CD8-positive, alpha-beta T cell (primary cell): ENCODE measurements at regions of chr1 and their contacts with region 1.

Region 1: DNA sequence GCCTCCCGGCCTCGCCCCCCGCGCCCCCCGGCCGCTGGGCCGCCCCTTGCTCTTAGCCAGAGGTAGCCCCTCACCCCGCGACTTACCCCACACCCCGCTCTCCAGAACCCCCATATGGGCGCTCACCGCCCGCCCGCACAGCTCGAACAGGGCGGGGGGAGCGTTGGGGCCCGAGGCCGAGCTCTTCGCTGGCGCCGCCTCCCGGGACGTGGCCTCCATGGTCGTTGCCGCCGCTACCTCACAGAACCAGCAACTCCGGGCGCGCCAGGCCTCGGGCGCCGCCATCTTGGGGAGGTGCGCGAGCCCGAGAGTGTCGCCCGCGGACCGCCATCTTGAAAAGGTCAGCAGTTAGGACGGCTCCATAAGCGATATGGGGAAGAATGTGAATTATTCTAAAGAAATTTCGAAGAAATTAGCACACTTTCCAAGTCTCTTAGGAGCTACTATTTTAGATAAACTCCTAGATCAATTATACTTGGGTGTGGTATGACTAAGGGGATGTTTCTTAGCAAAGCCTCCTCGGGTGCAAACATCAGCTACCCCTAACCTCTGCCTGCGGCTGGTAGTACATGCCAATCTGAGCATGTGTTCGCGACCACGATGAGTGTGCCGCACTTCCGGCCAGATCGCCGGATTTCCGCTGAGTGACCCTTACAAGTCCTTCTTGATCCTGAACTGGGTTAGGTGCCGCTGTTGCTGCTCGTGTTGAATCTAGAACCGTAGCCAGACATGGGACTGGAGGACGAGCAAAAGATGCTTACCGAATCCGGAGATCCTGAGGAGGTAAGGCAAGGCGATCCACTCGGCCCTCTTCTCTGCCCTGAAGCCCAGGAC is at the starts of genes LRRC41 and UQCRH:
- DNase-seq: peak; percentile 90 to 96 (median 92)
- ATAC-seq: peak; percentile 87
- H3K4me3 ChIP-seq: peak within 1 kb of the TSS; percentile 81 to 88
- H3K4me3 Mint-ChIP-seq: peak within 1 kb of the TSS; percentile 97
- H3K27ac ChIP-seq: peak within 1 kb of the TSS; percentile 84 to 89
- H3K27ac Mint-ChIP-seq: peak within 1 kb of the TSS; percentile 96
- H3K4me1 ChIP-seq: peaks cover 44% of the 10 kb centered on the region
- H3K4me1 Mint-ChIP-seq: peaks cover 55% of the 10 kb centered on the region
- H3K27me3 ChIP-seq: no peaks in the 10 kb centered on the region
- H3K27me3 Mint-ChIP-seq: no peaks in the 10 kb centered on the region
- CTCF ChIP-seq: no peak
- total RNA-seq, gene LRRC41: 25.5 to 27.1 TPM
- total RNA-seq, gene UQCRH: 100 to 118 TPM

Region 2: DNA sequence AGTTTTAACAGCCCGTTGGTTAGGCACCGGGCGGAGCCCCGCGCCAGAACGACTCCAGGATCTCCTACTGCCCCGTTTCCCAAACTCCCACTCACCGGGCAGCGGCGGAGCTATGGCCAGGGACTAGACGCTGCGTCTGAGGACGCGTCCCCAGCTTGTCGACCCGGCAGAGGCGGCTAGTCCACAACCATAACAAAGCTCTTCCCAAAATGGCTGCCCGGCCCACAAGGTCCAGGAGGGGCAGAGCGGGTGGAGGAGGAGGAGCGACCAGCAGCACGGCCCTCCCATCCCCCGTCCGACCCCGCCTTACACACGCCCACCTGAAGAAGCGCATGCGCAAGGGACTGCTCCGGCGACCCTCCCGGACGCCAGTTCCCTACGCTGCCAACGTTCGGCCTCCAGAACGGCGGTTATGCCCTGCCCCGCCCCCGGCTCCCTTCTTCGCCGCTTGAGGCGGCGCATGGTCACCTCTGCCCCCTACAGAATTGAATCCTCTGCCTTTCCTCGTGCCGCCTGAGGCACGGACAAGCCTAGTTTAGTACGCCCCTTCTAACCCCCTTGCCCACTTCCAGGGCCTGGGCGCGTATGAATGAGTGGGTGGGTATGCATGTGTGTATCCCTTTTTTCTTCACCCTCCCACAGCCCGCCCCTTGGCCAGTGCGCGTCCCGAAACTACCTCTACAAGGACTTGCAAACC is 616.8 kb before region 1 on chr1 and contains the start of gene GPBP1L1:
- CTCF ChIA-PET with region 1: no interaction called
- POLR2A ChIA-PET with region 1: no interaction called
- intact Hi-C with region 1: loop called (anchors 2 to 5 kb)
- DNase-seq: peak; percentile 95 to 98 (median 98)
- ATAC-seq: peak; percentile 72
- H3K4me3 ChIP-seq: peak within 1 kb of the TSS; percentile 99
- H3K4me3 Mint-ChIP-seq: peak within 1 kb of the TSS; percentile 97
- H3K27ac ChIP-seq: peak within 1 kb of the TSS; percentile 84 to 92
- H3K27ac Mint-ChIP-seq: peak within 1 kb of the TSS; percentile 100
- H3K4me1 ChIP-seq: peaks cover 39% of the 10 kb centered on the region
- H3K4me1 Mint-ChIP-seq: peaks cover 59% of the 10 kb centered on the region
- H3K27me3 ChIP-seq: no peaks in the 10 kb centered on the region
- H3K27me3 Mint-ChIP-seq: no peaks in the 10 kb centered on the region
- CTCF ChIP-seq: no peak
- total RNA-seq, gene GPBP1L1: 125 to 128 TPM

Region 3: GRCh38 chr1:46197964-46198811 is 105.1 kb before region 1 on chr1 and contains the start of gene POMGNT1:
- CTCF ChIA-PET with region 1: no interaction called
- POLR2A ChIA-PET with region 1: no interaction called
- intact Hi-C with region 1: loop called (anchors 1 to 5 kb)
- DNase-seq: peak; percentile 50 to 86 (median 72)
- ATAC-seq: peak; percentile 93
- H3K4me3 ChIP-seq: peak within 1 kb of the TSS; percentile 75 to 93
- H3K4me3 Mint-ChIP-seq: peak within 1 kb of the TSS; percentile 83
- H3K27ac ChIP-seq: peak within 1 kb of the TSS; percentile 58 to 59
- H3K27ac Mint-ChIP-seq: peak within 1 kb of the TSS; percentile 88
- H3K4me1 ChIP-seq: peaks cover 20% of the 10 kb centered on the region
- H3K4me1 Mint-ChIP-seq: peaks cover 32% of the 10 kb centered on the region
- H3K27me3 ChIP-seq: peaks cover 0 to 3% of the 10 kb centered on the region in 2 experiments
- H3K27me3 Mint-ChIP-seq: no peaks in the 10 kb centered on the region
- CTCF ChIP-seq: no peak
- total RNA-seq, gene POMGNT1: 20.3 to 23.4 TPM

Region 4: GRCh38 chr1:46236882-46237281 is 66.4 kb before region 1 on chr1:
- CTCF ChIA-PET with region 1: no interaction called
- POLR2A ChIA-PET with region 1: no interaction called
- intact Hi-C with region 1: no loop called
- DNase-seq: no peak
- ATAC-seq: no peak
- H3K4me3 ChIP-seq: no peak overlapping the region
- H3K4me3 Mint-ChIP-seq: no peak overlapping the region
- H3K27ac ChIP-seq: no peak overlapping the region
- H3K27ac Mint-ChIP-seq: no peak overlapping the region
- H3K4me1 ChIP-seq: no peaks in the 10 kb centered on the region
- H3K4me1 Mint-ChIP-seq: no peaks in the 10 kb centered on the region
- H3K27me3 ChIP-seq: no peaks in the 10 kb centered on the region
- H3K27me3 Mint-ChIP-seq: no peaks in the 10 kb centered on the region
- CTCF ChIP-seq: no peak

Region 5: DNA sequence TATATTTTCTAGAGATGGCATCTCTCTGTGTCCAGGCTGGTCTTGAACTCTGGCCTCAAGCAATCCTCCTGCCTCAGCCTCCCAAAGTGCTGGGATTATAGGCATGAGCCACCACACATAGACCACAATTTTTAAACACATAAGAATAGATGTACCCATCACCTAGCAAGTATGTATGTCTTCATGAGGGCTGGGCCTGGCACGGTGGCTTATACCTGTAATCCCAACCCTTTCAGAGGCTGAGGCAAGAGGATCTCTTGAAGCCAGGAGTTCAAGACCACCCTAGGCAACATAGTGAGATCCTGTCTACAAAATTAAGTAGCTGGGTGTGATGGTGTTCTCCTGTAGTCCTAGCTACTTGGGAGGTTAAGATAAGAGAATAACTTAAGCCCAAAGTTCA is 14.1 kb after region 1 on chr1:
- CTCF ChIA-PET with region 1: interaction called, 3 read pairs
- POLR2A ChIA-PET with region 1: interaction called, 11 read pairs
- intact Hi-C with region 1: no loop called
- DNase-seq: no peak
- ATAC-seq: no peak
- H3K4me3 ChIP-seq: no peak overlapping the region
- H3K4me3 Mint-ChIP-seq: no peak overlapping the region
- H3K27ac ChIP-seq: no peak overlapping the region
- H3K27ac Mint-ChIP-seq: no peak overlapping the region
- H3K4me1 ChIP-seq: no peaks in the 10 kb centered on the region
- H3K4me1 Mint-ChIP-seq: no peaks in the 10 kb centered on the region
- H3K27me3 ChIP-seq: no peaks in the 10 kb centered on the region
- H3K27me3 Mint-ChIP-seq: no peaks in the 10 kb centered on the region
- CTCF ChIP-seq: no peak

Region 6: DNA sequence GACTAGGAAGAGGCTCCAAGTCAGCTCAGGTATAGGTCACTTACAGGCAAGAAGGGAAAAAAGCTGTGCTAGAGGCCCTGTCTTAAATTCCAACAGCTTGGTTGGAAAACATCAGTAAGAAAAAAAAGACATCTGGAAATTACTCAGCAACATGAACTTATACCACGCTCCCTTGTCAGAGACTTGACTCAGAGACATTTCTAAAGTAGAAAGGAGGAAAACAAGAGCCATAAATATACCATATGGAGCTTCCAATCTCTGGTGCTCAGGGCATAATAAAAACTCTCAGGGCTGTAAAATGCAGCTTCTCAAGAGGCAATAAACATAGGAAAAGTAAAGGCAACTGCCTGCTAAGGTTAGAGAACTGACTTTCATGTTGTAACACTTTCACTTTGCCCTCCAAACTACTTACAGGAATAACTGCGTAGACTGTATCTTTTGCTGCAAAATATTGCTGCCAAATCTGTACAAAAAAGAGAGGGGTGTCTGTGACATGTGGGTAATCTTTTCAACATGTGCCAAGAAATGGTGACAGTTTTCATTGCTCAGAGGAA is 350.2 kb after region 1 on chr1:
- CTCF ChIA-PET with region 1: no interaction called
- POLR2A ChIA-PET with region 1: no interaction called
- intact Hi-C with region 1: no loop called
- DNase-seq: no peak
- ATAC-seq: no peak
- H3K4me3 ChIP-seq: no peak overlapping the region
- H3K4me3 Mint-ChIP-seq: no peak overlapping the region
- H3K27ac ChIP-seq: no peak overlapping the region
- H3K27ac Mint-ChIP-seq: peak overlapping the region; percentile 35
- H3K4me1 ChIP-seq: no peaks in the 10 kb centered on the region
- H3K4me1 Mint-ChIP-seq: no peaks in the 10 kb centered on the region
- H3K27me3 ChIP-seq: no peaks in the 10 kb centered on the region
- H3K27me3 Mint-ChIP-seq: no peaks in the 10 kb centered on the region
- CTCF ChIP-seq: no peak